Naive thymus-derived CD4-positive, alpha-beta T cell (primary cell): ENCODE measurements at regions of chr9 and their contacts with region 1.

Region 1: DNA sequence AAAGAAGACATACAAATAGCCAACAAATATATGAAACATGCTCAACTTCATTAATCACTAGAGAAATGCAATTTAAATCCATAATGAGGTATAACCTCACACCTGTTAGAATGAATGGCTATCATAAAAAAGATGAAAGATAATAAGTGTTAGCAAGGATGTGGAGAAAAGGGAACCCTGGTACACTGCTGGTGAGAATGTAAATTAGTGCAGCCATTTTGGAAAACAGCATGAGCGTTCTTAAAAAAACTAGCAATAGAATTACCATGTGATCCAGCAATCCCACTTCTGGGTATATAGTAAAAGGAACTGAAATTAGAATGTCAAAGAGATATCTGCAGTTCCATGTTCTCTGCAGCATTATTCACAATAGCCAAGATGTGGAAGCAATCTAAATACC is 64.2 kb upstream of the CEP78 start:
- DNase-seq: no peak
- ATAC-seq: no peak
- H3K4me3 ChIP-seq: no peak overlapping the region
- H3K4me3 Mint-ChIP-seq: no peak overlapping the region
- H3K27ac ChIP-seq: no peak overlapping the region
- H3K27ac Mint-ChIP-seq: no peak overlapping the region
- H3K4me1 ChIP-seq: no peaks in the 10 kb centered on the region
- H3K4me1 Mint-ChIP-seq: no peaks in the 10 kb centered on the region
- H3K27me3 ChIP-seq: no peaks in the 10 kb centered on the region
- H3K27me3 Mint-ChIP-seq: peaks cover 0 to 36% (median 0%) of the 10 kb centered on the region in 5 donors

Region 2: GRCh38 chr9:77417566-77417965 is 754.1 kb before region 1 on chr9:
- CTCF ChIA-PET with region 1: no interaction called
- POLR2A ChIA-PET with region 1: no interaction called
- intact Hi-C with region 1: no loop called
- DNase-seq: no peak
- ATAC-seq: no peak
- H3K4me3 ChIP-seq: no peak overlapping the region
- H3K4me3 Mint-ChIP-seq: no peak overlapping the region
- H3K27ac ChIP-seq: no peak overlapping the region
- H3K27ac Mint-ChIP-seq: peak overlapping the region in 1 of 9 donors; percentile 58
- H3K4me1 ChIP-seq: no peaks in the 10 kb centered on the region
- H3K4me1 Mint-ChIP-seq: peaks cover 0 to 1% (median 0%) of the 10 kb centered on the region in 7 donors
- H3K27me3 ChIP-seq: no peaks in the 10 kb centered on the region
- H3K27me3 Mint-ChIP-seq: no peaks in the 10 kb centered on the region

Region 3: GRCh38 chr9:77779010-77779409 is 392.6 kb before region 1 on chr9:
- CTCF ChIA-PET with region 1: no interaction called
- POLR2A ChIA-PET with region 1: no interaction called
- intact Hi-C with region 1: no loop called
- DNase-seq: peak in 1 of 9 donors; percentile 1
- ATAC-seq: no peak
- H3K4me3 ChIP-seq: no peak overlapping the region
- H3K4me3 Mint-ChIP-seq: peak overlapping the region; percentile 13 to 70 (median 55)
- H3K27ac ChIP-seq: no peak overlapping the region
- H3K27ac Mint-ChIP-seq: peak overlapping the region in 6 of 9 donors; percentile 16 to 78 (median 44)
- H3K4me1 ChIP-seq: peaks cover 7 to 13% of the 10 kb centered on the region in 2 donors
- H3K4me1 Mint-ChIP-seq: peaks cover 20 to 50% (median 36%) of the 10 kb centered on the region in 7 donors
- H3K27me3 ChIP-seq: no peaks in the 10 kb centered on the region
- H3K27me3 Mint-ChIP-seq: no peaks in the 10 kb centered on the region

Region 4: GRCh38 chr9:78023003-78023741 is 148.5 kb before region 1 on chr9:
- CTCF ChIA-PET with region 1: no interaction called
- POLR2A ChIA-PET with region 1: no interaction called
- intact Hi-C with region 1: no loop called
- DNase-seq: peak in 1 of 9 donors; percentile 21
- ATAC-seq: peak; percentile 83
- H3K4me3 ChIP-seq: no peak overlapping the region
- H3K4me3 Mint-ChIP-seq: peak overlapping the region in 9 of 10 donors; percentile 8 to 84 (median 57)
- H3K27ac ChIP-seq: no peak overlapping the region
- H3K27ac Mint-ChIP-seq: peak overlapping the region in 4 of 9 donors; percentile 24 to 78 (median 54)
- H3K4me1 ChIP-seq: peaks cover 0 to 25% of the 10 kb centered on the region in 2 donors
- H3K4me1 Mint-ChIP-seq: peaks cover 41 to 85% (median 72%) of the 10 kb centered on the region in 7 donors
- H3K27me3 ChIP-seq: no peaks in the 10 kb centered on the region
- H3K27me3 Mint-ChIP-seq: no peaks in the 10 kb centered on the region

Region 5: DNA sequence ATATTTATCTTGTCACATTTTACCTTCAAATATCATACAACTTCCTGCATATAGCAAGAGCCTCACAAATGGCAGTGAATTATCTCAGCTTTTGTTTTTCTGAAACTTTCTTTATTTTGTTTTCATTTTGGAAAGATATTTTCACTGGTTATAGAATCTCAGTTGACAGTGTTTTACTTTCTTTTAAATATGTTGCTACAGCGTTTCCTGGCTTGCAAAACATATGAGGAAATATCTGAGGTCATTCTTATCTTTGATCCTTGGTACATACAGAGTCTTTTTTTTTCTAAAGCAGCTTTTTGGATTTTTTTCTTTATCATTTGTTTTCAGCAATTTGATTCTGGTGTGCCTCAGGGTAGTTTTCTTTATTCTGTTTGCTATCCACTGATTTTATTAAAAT is 13.4 kb before region 1 on chr9:
- CTCF ChIA-PET with region 1: no interaction called
- POLR2A ChIA-PET with region 1: no interaction called
- intact Hi-C with region 1: loop called in 1 of 2 experiments (anchors 1 kb)
- DNase-seq: peak in 4 of 9 donors; percentile 1 to 37 (median 18)
- ATAC-seq: no peak
- H3K4me3 ChIP-seq: no peak overlapping the region
- H3K4me3 Mint-ChIP-seq: no peak overlapping the region
- H3K27ac ChIP-seq: no peak overlapping the region
- H3K27ac Mint-ChIP-seq: peak overlapping the region in 2 of 9 donors; percentile 14 to 17
- H3K4me1 ChIP-seq: no peaks in the 10 kb centered on the region
- H3K4me1 Mint-ChIP-seq: peaks cover 0 to 7% (median 0%) of the 10 kb centered on the region in 7 donors
- H3K27me3 ChIP-seq: no peaks in the 10 kb centered on the region
- H3K27me3 Mint-ChIP-seq: peaks cover 0 to 52% (median 0%) of the 10 kb centered on the region in 5 donors